ENCODE measurements at regions of chr4 and their contacts with region 1.

Region 1: GRCh38 chr4:16001484-16001858 is 38.5 kb upstream of the FGFBP2 start:
- DNase-seq: peak; percentile 76
- CTCF ChIP-seq: peak; percentile 75

Region 2: DNA sequence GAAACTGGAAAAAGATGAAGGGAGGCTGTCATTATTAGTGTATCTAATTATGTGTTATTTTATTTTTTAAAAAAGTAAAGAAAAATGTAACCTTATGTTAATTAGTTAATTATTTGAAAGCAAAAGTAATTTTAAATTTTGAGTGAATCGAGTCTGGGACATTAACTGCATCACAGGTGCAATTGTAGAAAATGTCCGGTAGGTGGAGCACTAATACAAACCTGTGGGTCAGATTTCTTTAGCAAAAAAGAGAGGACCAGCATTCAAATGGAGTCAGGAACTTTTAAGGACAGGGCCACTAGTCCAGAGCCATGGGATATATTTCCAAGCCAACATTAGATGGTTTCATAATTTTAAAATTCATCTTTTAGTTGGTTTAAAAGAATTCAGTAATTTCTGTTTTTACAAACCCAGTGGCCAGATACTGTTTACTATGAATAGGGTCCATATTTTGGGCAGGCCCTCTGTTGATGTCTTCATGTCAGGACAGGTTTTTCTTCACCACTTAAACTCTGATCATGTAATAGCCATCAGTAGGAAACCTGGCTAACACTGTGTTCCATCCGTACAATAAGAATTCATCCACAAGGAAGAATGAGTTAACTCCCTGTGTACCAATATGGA is 271.4 kb before region 1 on chr4:
- CTCF ChIA-PET with region 1: interaction called, 10 read pairs
- POLR2A ChIA-PET with region 1: no interaction called
- DNase-seq: peak; percentile 64
- CTCF ChIP-seq: peak; percentile 71

Region 3: DNA sequence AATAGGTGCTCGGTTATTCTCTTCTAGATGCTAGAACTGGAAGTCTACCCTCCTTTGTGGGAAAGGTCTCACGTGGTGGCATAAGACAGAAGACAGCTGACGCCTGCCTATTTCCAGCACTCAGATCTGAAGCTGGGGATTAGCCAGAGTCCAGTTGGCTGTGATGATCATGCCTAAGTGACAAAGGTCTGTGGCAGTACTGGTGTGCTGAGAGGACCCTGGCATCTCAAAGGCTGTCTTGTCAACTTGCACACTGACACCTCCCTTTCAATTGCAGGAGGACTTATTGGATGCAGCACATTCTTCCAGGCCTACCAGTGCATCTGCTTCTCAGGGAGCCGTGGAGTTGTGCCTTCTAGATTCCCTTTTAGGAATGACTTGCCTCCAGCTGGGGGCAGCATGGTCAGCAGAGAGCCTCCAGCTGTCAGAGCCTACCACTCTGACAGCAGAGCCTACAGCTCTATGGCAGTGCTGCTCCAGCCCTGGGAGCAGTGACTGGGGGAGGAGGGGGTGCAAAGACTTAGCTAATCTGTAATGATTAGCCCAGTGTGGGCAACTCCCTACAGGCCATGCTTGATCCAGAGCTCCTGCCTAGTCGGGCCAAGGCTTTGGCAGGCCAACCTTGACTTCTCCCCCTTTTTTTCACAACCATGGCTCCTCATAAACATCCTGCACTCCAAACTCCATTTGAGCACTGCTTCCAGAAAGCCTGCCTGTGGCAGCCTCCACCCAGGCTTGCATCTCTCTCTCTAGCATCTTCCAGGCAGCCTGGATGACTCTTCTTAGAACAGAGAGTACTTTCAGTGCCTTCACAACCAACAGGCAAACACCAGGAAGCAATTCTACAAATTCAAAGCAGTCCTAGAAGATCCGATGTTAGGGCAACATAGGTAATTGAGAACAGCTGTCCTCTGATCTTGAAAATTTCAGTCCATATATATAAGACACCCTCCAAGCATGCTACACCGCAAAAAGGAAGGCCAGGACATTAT is 24.7 kb before region 1 on chr4:
- CTCF ChIA-PET with region 1: interaction called, 13 read pairs
- POLR2A ChIA-PET with region 1: no interaction called
- DNase-seq: no peak
- CTCF ChIP-seq: no peak

Region 4: GRCh38 chr4:15989424-15989823 is 12.0 kb before region 1 on chr4:
- CTCF ChIA-PET with region 1: interaction called, 11 read pairs
- POLR2A ChIA-PET with region 1: no interaction called
- DNase-seq: no peak
- CTCF ChIP-seq: no peak

Region 5: GRCh38 chr4:16016536-16016935 is 15.1 kb after region 1 on chr4:
- CTCF ChIA-PET with region 1: interaction called, 15 read pairs
- POLR2A ChIA-PET with region 1: no interaction called
- DNase-seq: no peak
- CTCF ChIP-seq: no peak

Region 6: GRCh38 chr4:16116493-16116990 is 115.1 kb after region 1 on chr4:
- CTCF ChIA-PET with region 1: no interaction called
- POLR2A ChIA-PET with region 1: no interaction called
- DNase-seq: no peak
- CTCF ChIP-seq: no peak